Caco-2 (cell line): ENCODE measurements at regions of chr9 and their contacts with region 1.

Region 1: DNA sequence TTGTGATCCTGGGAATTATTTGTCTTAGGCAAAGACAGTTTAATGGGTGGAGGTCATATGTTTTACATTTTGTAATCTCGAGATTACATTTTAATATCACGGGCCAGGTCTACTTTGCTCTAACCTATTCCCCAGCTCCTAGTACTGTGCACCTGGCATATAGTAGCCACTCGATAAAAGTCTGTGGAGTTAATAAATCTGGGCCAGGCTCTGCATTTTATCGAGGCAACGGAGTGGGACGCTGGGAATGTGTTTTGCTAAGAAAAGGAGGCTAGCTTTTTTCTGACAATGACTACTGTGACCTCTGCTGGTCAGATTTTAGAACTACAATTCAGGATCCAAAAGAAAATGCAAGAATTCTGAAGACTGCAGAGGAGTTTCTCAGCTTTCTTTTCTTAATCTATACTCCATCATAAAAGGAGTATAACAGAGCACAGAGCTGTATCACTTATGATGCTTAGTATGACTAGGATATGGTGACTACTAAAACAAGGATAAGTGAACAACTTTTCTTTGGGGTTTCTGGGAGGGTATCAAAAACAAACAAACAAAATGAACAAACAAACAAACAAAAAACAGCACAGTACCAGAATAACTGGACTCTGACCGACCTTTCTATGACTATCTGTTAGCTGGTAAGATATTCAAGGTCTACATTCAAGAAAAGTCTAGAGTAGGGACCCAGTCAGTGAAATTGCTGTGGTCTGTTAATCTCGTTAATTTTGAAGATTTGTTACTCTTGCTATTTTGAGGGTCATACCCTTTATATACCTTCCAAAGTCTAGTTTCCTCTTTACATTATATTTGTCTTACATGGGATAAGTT is 46.1 kb upstream of the CER1 start:
- DNase-seq: peak in 1 of 2 experiments; percentile 43
- H3K4me3 ChIP-seq: no peak overlapping the region
- H3K4me3 Mint-ChIP-seq: no peak overlapping the region
- H3K27ac Mint-ChIP-seq: no peak overlapping the region
- H3K4me1 ChIP-seq: no peaks in the 10 kb centered on the region
- H3K4me1 Mint-ChIP-seq: no peaks in the 10 kb centered on the region
- H3K27me3 ChIP-seq: no peaks in the 10 kb centered on the region
- H3K27me3 Mint-ChIP-seq: no peaks in the 10 kb centered on the region
- CTCF ChIP-seq: peak; percentile 59 to 64

Region 2: GRCh38 chr9:13351778-13352386 is 1416.7 kb before region 1 on chr9:
- CTCF ChIA-PET with region 1: no interaction called
- POLR2A ChIA-PET with region 1: no interaction called
- intact Hi-C with region 1: loop called (anchors 10 kb)
- DNase-seq: no peak
- H3K4me3 ChIP-seq: no peak overlapping the region
- H3K4me3 Mint-ChIP-seq: no peak overlapping the region
- H3K27ac Mint-ChIP-seq: no peak overlapping the region
- H3K4me1 ChIP-seq: no peaks in the 10 kb centered on the region
- H3K4me1 Mint-ChIP-seq: no peaks in the 10 kb centered on the region
- H3K27me3 ChIP-seq: no peaks in the 10 kb centered on the region
- H3K27me3 Mint-ChIP-seq: peaks cover 3% of the 10 kb centered on the region
- CTCF ChIP-seq: peak in 1 of 2 experiments; percentile 22

Region 3: GRCh38 chr9:14441976-14442651 is 326.5 kb before region 1 on chr9:
- CTCF ChIA-PET with region 1: interaction called, 6 read pairs
- POLR2A ChIA-PET with region 1: no interaction called
- intact Hi-C with region 1: loop called (anchors 1 kb)
- DNase-seq: peak; percentile 44 to 49
- H3K4me3 ChIP-seq: no peak overlapping the region
- H3K4me3 Mint-ChIP-seq: no peak overlapping the region
- H3K27ac Mint-ChIP-seq: no peak overlapping the region
- H3K4me1 ChIP-seq: no peaks in the 10 kb centered on the region
- H3K4me1 Mint-ChIP-seq: no peaks in the 10 kb centered on the region
- H3K27me3 ChIP-seq: no peaks in the 10 kb centered on the region
- H3K27me3 Mint-ChIP-seq: peaks cover 12% of the 10 kb centered on the region
- CTCF ChIP-seq: peak; percentile 36 to 39

Region 4: GRCh38 chr9:14466429-14466818 is 302.2 kb before region 1 on chr9:
- CTCF ChIA-PET with region 1: interaction called, 5 read pairs
- POLR2A ChIA-PET with region 1: no interaction called
- intact Hi-C with region 1: loop called (anchors 1 kb)
- DNase-seq: no peak
- H3K4me3 ChIP-seq: no peak overlapping the region
- H3K4me3 Mint-ChIP-seq: no peak overlapping the region
- H3K27ac Mint-ChIP-seq: no peak overlapping the region
- H3K4me1 ChIP-seq: no peaks in the 10 kb centered on the region
- H3K4me1 Mint-ChIP-seq: no peaks in the 10 kb centered on the region
- H3K27me3 ChIP-seq: no peaks in the 10 kb centered on the region
- H3K27me3 Mint-ChIP-seq: peaks cover 7% of the 10 kb centered on the region
- CTCF ChIP-seq: no peak

Region 5: DNA sequence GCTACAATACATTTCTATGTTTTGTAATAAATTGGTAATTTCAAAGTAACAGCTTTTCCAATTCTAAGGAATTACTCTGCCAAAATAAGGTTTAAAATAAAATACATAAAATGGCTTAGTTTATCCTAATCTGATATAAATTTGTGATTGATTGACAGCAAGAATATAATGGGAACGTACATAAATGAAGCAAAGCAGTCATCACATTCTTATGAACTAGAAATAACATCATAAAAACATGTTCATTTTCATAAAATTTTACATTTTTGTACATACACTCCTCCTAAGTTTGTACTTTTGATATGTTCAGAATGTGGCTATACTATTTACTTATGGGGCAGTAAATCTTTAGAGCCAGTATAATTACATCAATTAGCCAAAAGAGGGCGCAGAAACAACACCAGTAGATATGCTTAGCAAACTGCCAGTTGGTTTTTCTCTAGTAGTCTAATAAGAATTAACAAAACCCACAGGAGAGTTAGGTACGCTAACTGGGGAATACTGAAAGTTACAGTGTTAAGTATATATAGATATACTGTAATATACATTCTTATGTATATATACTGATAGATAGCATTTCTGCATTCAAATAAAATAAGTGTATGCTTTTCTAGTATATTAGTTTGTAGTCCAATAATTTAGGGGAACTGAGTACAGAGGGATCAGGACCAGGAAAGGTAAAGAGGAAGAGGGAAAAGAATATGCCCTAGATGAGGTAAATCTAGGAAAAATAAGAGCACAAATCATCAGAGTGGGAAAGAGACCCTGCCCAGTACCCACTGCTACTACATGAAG is 152.2 kb before region 1 on chr9:
- CTCF ChIA-PET with region 1: no interaction called
- POLR2A ChIA-PET with region 1: no interaction called
- intact Hi-C with region 1: loop called (anchors 1 kb)
- DNase-seq: peak in 1 of 2 experiments; percentile 16
- H3K4me3 ChIP-seq: no peak overlapping the region
- H3K4me3 Mint-ChIP-seq: no peak overlapping the region
- H3K27ac Mint-ChIP-seq: no peak overlapping the region
- H3K4me1 ChIP-seq: no peaks in the 10 kb centered on the region
- H3K4me1 Mint-ChIP-seq: no peaks in the 10 kb centered on the region
- H3K27me3 ChIP-seq: no peaks in the 10 kb centered on the region
- H3K27me3 Mint-ChIP-seq: no peaks in the 10 kb centered on the region
- CTCF ChIP-seq: peak; percentile 42 to 45

Region 6: GRCh38 chr9:14652729-14653377 is 115.8 kb before region 1 on chr9:
- CTCF ChIA-PET with region 1: interaction called, 6 read pairs
- POLR2A ChIA-PET with region 1: no interaction called
- intact Hi-C with region 1: loop called (anchors 10 kb)
- DNase-seq: peak in 1 of 2 experiments; percentile 31
- H3K4me3 ChIP-seq: no peak overlapping the region
- H3K4me3 Mint-ChIP-seq: no peak overlapping the region
- H3K27ac Mint-ChIP-seq: no peak overlapping the region
- H3K4me1 ChIP-seq: no peaks in the 10 kb centered on the region
- H3K4me1 Mint-ChIP-seq: no peaks in the 10 kb centered on the region
- H3K27me3 ChIP-seq: no peaks in the 10 kb centered on the region
- H3K27me3 Mint-ChIP-seq: no peaks in the 10 kb centered on the region
- CTCF ChIP-seq: peak; percentile 39 to 60

Region 7: DNA sequence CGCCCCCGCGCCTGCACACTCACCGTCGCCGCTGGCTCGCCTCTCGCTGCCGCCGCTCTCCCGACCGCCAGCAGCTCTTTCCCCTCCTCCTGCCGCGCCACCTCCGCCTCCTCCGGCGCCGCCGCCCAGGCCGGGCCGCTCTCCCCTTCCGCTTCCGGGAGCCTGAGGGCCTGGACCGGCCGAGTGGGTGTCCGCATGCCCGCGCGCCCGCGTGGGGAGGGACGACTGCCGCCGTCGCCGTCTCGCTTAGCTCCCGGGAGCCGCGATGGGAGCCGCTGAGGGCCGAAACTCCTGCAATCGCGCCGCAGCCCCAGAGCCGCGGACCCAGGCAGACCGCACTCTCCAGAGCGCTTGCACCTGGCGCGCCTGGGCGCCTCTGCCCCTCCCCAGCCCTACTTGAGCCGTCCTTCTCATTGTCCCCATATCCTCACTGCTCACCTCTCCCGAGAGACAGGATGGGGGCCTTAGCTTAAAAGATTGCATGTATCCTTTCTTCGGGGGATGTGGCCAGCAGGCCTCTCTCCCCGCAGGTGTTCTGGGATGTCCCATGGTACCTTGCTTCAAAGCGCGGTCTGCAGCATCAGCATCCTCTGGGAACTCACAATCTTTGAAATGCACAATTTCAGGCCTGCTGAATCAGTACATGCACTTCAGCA is 75.3 kb before region 1 on chr9 and contains the start of gene ZDHHC21:
- CTCF ChIA-PET with region 1: no interaction called
- POLR2A ChIA-PET with region 1: no interaction called
- intact Hi-C with region 1: loop called (anchors 10 kb)
- DNase-seq: peak; percentile 40 to 60
- H3K4me3 ChIP-seq: peak within 1 kb of the TSS; percentile 47
- H3K4me3 Mint-ChIP-seq: peak within 1 kb of the TSS; percentile 87
- H3K27ac Mint-ChIP-seq: peak within 1 kb of the TSS; percentile 80
- H3K4me1 ChIP-seq: no peaks in the 10 kb centered on the region
- H3K4me1 Mint-ChIP-seq: no peaks in the 10 kb centered on the region
- H3K27me3 ChIP-seq: no peaks in the 10 kb centered on the region
- H3K27me3 Mint-ChIP-seq: peaks cover 3% of the 10 kb centered on the region
- CTCF ChIP-seq: no peak
- total RNA-seq, gene ZDHHC21: 5.8 and 6.8 TPM in 2 replicates